Spleen (tissue), 13 donors: ENCODE measurements at regions of chr1 and their contacts with region 1.

Region 1: GRCh38 chr1:5514519-5515183 is 477.6 kb downstream of the NPHP4 start:
- DNase-seq: peak; percentile 92
- H3K4me3 ChIP-seq: no peak overlapping the region
- H3K27ac ChIP-seq: no peak overlapping the region
- H3K4me1 ChIP-seq: peaks cover 0 to 10% (median 1%) of the 10 kb centered on the region in 6 donors
- H3K27me3 ChIP-seq: peaks cover 0 to 65% (median 8%) of the 10 kb centered on the region in 7 donors
- CTCF ChIP-seq: peak; percentile 89 to 100 (median 99)
- POLR2A ChIP-seq: no peak

Region 2: DNA sequence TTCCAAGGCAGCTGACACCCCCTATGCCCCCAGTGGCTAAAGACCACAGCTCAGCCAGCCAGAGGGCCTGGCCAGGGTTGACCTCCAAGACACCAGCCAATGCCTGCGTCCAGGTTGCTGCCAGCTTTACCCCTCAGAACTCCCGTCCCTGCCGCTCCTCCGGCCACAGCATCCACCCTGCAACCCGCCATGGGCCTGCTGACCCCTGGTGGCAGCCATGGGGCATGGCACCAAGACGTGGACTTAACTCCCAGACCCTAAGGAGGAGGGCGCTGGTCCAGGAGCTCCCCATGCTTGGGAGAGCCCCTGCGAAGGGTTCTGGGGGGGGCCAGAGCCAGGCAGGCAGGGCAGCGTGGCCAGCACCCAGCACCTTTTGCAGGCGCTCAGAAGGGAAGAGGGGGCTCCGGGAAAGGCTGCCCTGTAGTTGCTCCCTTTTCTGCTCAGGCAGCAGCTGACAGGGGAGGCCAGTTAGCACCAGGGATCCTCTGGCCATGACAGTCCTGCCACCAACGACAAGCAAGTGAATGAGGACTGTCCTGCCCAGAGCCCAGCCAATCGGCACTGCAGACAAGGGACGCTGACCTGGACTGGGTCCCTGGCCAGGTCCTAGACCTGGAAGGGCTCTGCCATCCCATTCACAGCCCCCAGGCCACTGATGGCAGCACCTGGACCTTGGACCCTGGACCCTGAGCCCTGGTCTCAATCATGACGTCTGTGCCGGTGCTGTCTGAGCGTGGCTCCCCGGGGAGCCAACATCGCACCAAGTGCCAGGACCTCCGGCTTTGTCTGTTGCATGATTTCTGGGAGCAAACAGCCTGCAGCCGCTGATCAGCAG is 231.3 kb after region 1 on chr1:
- intact Hi-C with region 1: loop called (anchors 2 kb)
- DNase-seq: peak; percentile 86
- H3K4me3 ChIP-seq: no peak overlapping the region
- H3K27ac ChIP-seq: no peak overlapping the region
- H3K4me1 ChIP-seq: no peaks in the 10 kb centered on the region
- H3K27me3 ChIP-seq: peaks cover 0 to 65% (median 13%) of the 10 kb centered on the region in 7 donors
- CTCF ChIP-seq: peak; percentile 52 to 89 (median 80)
- POLR2A ChIP-seq: no peak

Region 3: GRCh38 chr1:5915587-5916571 is 401.2 kb after region 1 on chr1:
- intact Hi-C with region 1: loop called (anchors 10 kb)
- DNase-seq: no peak
- H3K4me3 ChIP-seq: no peak overlapping the region
- H3K27ac ChIP-seq: no peak overlapping the region
- H3K4me1 ChIP-seq: peaks cover 0 to 8% (median 0%) of the 10 kb centered on the region in 6 donors
- H3K27me3 ChIP-seq: no peaks in the 10 kb centered on the region
- CTCF ChIP-seq: peak in 10 of 11 experiments; percentile 31 to 68 (median 58)
- POLR2A ChIP-seq: no peak